ENCODE measurements at regions of chr15 and their contacts with region 1.

Region 1: GRCh38 chr15:74027688-74028087 is 33.2 kb downstream of the PML start:
- DNase-seq: no peak
- H3K4me3 Mint-ChIP-seq: no peak overlapping the region
- H3K27ac Mint-ChIP-seq: no peak overlapping the region
- H3K4me1 Mint-ChIP-seq: no peaks in the 10 kb centered on the region
- H3K27me3 Mint-ChIP-seq: no peaks in the 10 kb centered on the region

Region 2: GRCh38 chr15:74011610-74012009 is 16.1 kb before region 1 on chr15:
- CTCF ChIA-PET with region 1: no interaction called
- POLR2A ChIA-PET with region 1: no interaction called
- DNase-seq: no peak
- H3K4me3 Mint-ChIP-seq: no peak overlapping the region
- H3K27ac Mint-ChIP-seq: no peak overlapping the region
- H3K4me1 Mint-ChIP-seq: peaks cover 57% of the 10 kb centered on the region
- H3K27me3 Mint-ChIP-seq: no peaks in the 10 kb centered on the region

Region 3: DNA sequence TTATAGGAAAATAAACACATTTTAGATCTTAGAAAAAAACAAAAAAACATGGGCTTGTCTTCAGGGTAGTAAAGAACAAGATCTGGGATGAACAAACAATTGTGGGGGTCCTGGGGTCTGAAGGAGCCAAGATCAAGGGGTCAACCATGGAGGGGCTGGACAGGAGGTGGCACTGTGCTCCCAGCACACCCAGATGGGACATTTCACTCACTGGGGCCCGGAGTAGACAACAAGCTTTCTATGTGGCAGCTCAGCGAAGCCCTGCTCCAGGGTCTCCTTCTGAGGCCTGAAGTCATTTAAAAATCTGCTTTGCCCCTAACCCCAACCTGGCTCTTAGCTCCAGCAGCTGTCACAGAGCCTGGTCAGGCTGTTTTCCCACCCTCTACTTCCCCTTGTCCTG is 20.1 kb after region 1 on chr15:
- CTCF ChIA-PET with region 1: interaction called, 10 read pairs
- POLR2A ChIA-PET with region 1: no interaction called
- DNase-seq: no peak
- H3K4me3 Mint-ChIP-seq: no peak overlapping the region
- H3K27ac Mint-ChIP-seq: peak overlapping the region; percentile 21
- H3K4me1 Mint-ChIP-seq: peaks cover 13% of the 10 kb centered on the region
- H3K27me3 Mint-ChIP-seq: no peaks in the 10 kb centered on the region

Region 4: DNA sequence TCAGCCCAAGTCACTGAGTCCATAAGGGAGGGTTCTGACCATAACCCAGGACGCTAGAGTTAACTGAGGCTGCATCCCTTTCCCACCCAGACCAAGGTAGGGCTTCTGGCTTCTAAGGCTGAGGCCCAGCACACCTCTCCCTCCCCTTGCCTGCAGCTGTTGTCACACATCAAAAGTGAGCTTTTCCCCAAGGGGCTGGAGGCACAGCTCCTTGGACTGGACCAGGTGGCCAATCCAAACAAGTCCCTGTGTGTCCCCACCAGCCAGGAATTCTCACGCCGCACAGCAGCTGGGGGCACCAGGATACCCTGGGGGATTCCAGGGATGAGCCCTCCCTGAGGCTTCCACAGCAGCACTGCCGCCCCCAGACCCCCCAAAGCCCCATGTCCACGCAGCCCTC is 80.4 kb after region 1 on chr15:
- CTCF ChIA-PET with region 1: no interaction called
- POLR2A ChIA-PET with region 1: no interaction called
- DNase-seq: no peak
- H3K4me3 Mint-ChIP-seq: no peak overlapping the region
- H3K27ac Mint-ChIP-seq: no peak overlapping the region
- H3K4me1 Mint-ChIP-seq: no peaks in the 10 kb centered on the region
- H3K27me3 Mint-ChIP-seq: peaks cover 4% of the 10 kb centered on the region

Measured in activated CD4-positive, alpha-beta memory T cell treated with anti-CD3 and anti-CD28 coated beads, Interleukin-2, amount 10 ng/mL, durations not matched to agents 7 days and 5 days (primary cell).